OCI-LY7 (cell line): ENCODE measurements at regions of chr1 and their contacts with region 1.

Region 1: GRCh38 chr1:119294722-119295121 is 73.9 kb upstream of the HAO2 start:
- DNase-seq: peak; percentile 29
- H3K4me3 ChIP-seq: no peak overlapping the region
- H3K27ac ChIP-seq: no peak overlapping the region
- H3K4me1 ChIP-seq: peaks cover 6% of the 10 kb centered on the region
- CTCF ChIP-seq: no peak

Region 2: DNA sequence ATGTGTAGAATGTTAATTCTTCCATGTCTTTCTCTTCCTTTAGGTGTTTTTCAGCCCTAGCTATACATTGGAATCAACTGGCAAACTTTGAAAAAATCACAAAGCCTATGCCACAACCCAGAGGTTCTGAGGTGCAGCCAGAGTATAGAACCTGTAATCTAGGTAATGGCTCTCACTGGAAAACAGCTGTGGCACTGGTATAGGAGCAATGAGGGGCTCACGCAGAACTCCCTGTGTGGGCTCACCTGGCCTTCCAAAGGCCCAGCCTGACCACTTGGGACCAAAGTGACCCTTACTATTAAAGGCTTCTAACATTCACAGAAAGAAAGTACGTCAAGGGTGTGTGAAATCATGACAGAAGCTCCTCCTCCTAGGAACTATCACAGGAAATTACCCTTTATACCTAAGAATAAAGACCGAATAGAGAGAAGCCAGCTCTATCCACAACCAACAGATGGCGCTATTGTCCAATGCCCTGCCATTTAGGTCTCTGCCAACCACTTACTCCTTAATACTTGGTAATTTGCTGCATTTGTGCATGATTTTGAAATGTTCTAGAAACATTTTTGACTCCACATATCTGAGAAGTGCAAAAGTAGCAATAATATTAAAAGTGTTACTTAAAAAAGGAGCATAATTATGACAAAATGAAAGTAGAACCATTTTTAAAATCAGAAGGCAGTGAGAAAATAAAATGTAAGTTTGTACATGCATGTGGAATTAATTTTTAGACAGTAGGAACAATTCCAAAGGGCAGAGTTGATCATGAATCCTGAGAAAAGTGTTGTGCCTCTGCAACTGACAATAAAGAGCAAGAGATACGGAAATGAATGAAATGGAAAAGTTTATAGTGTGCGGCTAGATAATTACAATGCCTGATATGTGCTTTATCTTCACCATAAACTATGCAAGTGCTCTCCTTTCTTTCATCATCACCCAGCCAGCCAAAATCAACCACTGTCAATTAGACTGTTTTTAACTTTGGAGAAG is 19.3 kb before region 1 on chr1:
- CTCF ChIA-PET with region 1: interaction called, 4 read pairs
- POLR2A ChIA-PET with region 1: no interaction called
- intact Hi-C with region 1: loop called (anchors 2 kb)
- DNase-seq: peak; percentile 63
- H3K4me3 ChIP-seq: no peak overlapping the region
- H3K27ac ChIP-seq: no peak overlapping the region
- H3K4me1 ChIP-seq: no peaks in the 10 kb centered on the region
- CTCF ChIP-seq: peak; percentile 97

Region 3: GRCh38 chr1:119358636-119359035 is 63.9 kb after region 1 on chr1:
- CTCF ChIA-PET with region 1: no interaction called
- POLR2A ChIA-PET with region 1: interaction called, 4 read pairs
- intact Hi-C with region 1: loop called (anchors 2 kb)
- DNase-seq: no peak
- H3K4me3 ChIP-seq: no peak overlapping the region
- H3K27ac ChIP-seq: no peak overlapping the region
- H3K4me1 ChIP-seq: no peaks in the 10 kb centered on the region
- CTCF ChIP-seq: no peak

Region 4: DNA sequence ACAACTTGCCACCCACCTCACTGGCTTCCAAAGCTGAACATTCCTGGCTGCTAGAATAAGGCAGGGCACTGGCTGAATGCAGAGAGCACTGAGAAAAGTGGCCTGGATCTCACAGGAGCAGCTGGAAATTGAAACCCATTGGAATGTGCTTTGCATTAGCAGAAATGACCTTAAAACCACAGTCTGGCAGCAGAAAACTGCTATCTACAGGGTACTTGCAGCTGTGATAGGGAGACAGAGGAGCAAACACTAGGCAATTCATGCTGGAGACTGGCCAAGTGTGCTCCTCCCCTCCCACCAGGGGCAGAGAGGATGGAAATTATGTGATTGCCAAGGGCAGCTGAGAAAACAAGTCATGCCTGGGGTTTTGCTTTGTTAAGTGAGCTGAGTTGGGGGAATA is 259.5 kb after region 1 on chr1:
- CTCF ChIA-PET with region 1: no interaction called
- POLR2A ChIA-PET with region 1: no interaction called
- intact Hi-C with region 1: no loop called
- DNase-seq: no peak
- H3K4me3 ChIP-seq: no peak overlapping the region
- H3K27ac ChIP-seq: no peak overlapping the region
- H3K4me1 ChIP-seq: no peaks in the 10 kb centered on the region
- CTCF ChIP-seq: no peak